AG04450 (cell line): ENCODE measurements at regions of chr12 and their contacts with region 1.

Region 1: GRCh38 chr12:25436203-25437030 is 116.7 kb downstream of the LMNTD1 start:
- DNase-seq: peak; percentile 67
- H3K4me3 ChIP-seq: peak overlapping the region; percentile 32
- H3K27ac ChIP-seq: no peak overlapping the region
- H3K27me3 ChIP-seq: no peaks in the 10 kb centered on the region
- CTCF ChIP-seq: peak; percentile 88

Region 2: GRCh38 chr12:25424211-25424731 is 12.1 kb before region 1 on chr12:
- CTCF ChIA-PET with region 1: interaction called, 13 read pairs
- POLR2A ChIA-PET with region 1: no interaction called
- DNase-seq: no peak
- H3K4me3 ChIP-seq: no peak overlapping the region
- H3K27ac ChIP-seq: no peak overlapping the region
- H3K27me3 ChIP-seq: no peaks in the 10 kb centered on the region
- CTCF ChIP-seq: no peak

Region 3: DNA sequence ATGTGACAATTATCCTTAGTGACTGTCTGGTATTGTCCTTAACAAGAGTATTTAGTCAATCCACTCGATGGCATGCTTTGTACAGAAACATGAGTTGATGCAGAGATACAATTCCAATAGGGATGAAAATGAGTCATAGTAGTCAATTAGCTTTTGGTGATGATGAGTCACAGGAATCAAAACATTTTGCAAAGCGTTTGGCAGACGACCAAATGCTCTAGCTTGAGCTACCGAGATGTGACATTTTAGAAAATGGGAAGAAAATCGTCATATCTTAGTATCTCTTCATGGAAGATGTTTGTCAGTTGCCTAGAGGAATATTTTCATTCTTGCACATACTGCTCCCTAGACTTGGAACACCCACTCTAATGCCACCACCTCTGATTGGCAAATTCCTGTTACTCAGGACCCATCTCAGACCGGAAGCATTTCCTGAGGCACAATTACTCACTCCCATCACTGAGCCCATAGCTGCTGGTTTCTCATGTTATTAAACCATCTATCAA is 21.7 kb after region 1 on chr12:
- CTCF ChIA-PET with region 1: interaction called, 12 read pairs
- POLR2A ChIA-PET with region 1: no interaction called
- DNase-seq: peak; percentile 85
- H3K4me3 ChIP-seq: peak overlapping the region; percentile 14; the same call in 1 of the 2 replicates
- H3K27ac ChIP-seq: no peak overlapping the region
- H3K27me3 ChIP-seq: no peaks in the 10 kb centered on the region
- CTCF ChIP-seq: no peak

Region 4: DNA sequence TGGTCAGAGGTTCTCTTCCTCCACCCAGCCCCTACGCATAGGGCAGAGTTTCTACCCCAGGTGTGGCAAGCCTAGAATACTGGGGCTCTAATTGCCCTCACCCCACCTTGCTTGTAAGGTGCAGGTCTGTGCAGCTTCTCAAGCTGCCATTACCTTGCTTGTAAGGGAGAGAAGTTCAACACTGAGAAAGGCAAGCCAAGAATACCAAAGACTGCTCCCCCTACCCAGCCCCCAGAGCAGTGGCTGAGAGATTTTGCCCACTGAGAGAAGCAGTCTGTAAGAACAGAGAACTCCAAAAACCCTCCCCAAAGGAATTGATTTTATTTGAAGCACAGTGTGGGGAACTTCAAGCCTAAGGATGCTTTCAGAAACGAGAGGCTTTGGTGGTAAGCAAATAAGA is 585.1 kb after region 1 on chr12:
- CTCF ChIA-PET with region 1: interaction called, 15 read pairs
- POLR2A ChIA-PET with region 1: no interaction called
- DNase-seq: no peak
- H3K4me3 ChIP-seq: no peak overlapping the region
- H3K27ac ChIP-seq: no peak overlapping the region
- H3K27me3 ChIP-seq: no peaks in the 10 kb centered on the region
- CTCF ChIP-seq: no peak

Region 5: DNA sequence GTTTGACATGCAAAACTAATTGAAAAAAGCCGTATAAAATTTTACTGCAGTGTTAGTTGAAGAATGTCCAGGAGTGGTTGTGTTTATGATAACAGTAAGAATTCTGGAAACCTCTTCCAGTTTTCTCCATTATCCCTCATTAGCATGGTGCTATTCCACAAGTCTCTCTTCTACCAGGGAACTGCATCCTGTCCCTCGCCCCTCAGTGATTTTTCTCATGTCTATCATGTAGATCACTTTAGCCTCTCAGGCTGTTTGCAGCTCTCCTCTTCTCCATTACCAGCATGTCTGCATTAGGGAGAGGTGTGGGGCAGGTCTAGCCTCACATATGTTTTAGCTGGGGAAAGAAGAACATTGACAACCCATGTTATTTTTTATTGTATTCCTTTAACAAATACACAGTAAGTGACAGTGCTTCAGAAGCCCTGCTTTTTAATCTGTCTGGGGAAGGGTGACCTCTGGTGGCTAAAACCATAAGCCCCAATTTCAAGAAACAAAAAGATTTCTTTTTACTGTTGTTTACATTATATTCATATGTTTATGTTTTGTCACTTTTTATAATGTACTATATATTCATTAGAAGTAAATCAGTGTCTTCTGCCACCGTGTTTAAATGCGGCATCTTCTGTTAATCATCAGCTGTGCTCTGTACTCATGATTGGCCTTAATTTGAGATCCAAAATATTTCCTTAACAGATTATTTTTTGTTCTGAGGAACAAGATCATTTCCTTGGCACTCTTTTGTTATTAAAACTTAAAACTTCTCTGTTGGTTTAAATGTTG is 592.7 kb after region 1 on chr12:
- CTCF ChIA-PET with region 1: interaction called, 20 read pairs
- POLR2A ChIA-PET with region 1: no interaction called
- DNase-seq: peak; percentile 26
- H3K4me3 ChIP-seq: no peak overlapping the region
- H3K27ac ChIP-seq: no peak overlapping the region
- H3K27me3 ChIP-seq: no peaks in the 10 kb centered on the region
- CTCF ChIP-seq: peak; percentile 77